ENCODE measurements at regions of chrX and their contacts with region 1.

Region 1: GRCh38 chrX:1537035-1537715 is at the start of gene P2RY8:
- DNase-seq: peak; percentile 56 to 88 (median 80)
- ATAC-seq: peak; percentile 91
- H3K4me3 ChIP-seq: peak within 1 kb of the TSS; percentile 81
- H3K4me3 Mint-ChIP-seq: peak within 1 kb of the TSS; percentile 89 to 99 (median 98)
- H3K27ac ChIP-seq: peak within 1 kb of the TSS; percentile 88
- H3K27ac Mint-ChIP-seq: peak within 1 kb of the TSS; percentile 98 to 100 (median 99)
- H3K4me1 ChIP-seq: peaks cover 3 to 6% of the 10 kb centered on the region in 2 donors
- H3K4me1 Mint-ChIP-seq: peaks cover 11 to 29% (median 20%) of the 10 kb centered on the region in 7 donors
- H3K27me3 ChIP-seq: no peaks in the 10 kb centered on the region
- H3K27me3 Mint-ChIP-seq: no peaks in the 10 kb centered on the region
- total RNA-seq, gene P2RY8: 109 to 158 (median 122) TPM

Region 2: DNA sequence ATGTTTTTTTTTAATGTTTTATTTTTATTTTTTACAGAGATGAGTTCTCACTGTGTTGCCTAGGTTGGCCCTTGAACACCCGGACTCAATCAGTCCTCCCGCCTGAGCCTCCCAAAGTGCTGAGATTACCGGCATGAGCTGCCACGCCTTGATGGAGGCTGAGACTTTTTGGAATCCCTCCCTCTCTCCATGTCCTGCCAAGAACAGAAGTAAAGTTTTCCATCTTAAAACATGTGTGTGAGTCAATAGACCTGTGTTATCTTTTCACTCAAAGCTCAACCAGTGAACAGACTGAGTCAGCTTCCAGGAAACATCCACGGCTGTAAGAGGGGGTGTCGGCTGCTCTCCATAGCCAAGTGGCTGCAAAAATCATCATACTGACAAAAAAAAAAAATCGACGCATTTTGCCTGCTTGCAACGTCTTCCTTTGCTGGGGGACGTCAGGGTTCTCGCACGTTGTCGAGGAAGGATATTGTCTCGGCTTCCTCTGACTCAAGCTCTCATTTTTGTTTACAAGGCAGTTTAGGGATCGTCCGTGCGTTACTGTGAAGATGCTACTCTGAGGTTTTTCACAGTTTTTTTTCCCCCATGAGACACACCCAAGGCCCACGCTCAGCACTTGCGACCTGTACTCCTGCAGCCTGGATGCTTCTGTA is 74.5 kb before region 1 on chrX:
- CTCF ChIA-PET with region 1: no interaction called
- POLR2A ChIA-PET with region 1: no interaction called
- intact Hi-C with region 1: loop called (anchors 1 to 2 kb)
- DNase-seq: peak; percentile 9 to 92 (median 88)
- ATAC-seq: peak; percentile 86
- H3K4me3 ChIP-seq: no peak overlapping the region
- H3K4me3 Mint-ChIP-seq: peak overlapping the region in 9 of 10 donors; percentile 15 to 90 (median 43)
- H3K27ac ChIP-seq: peak overlapping the region; percentile 80
- H3K27ac Mint-ChIP-seq: peak overlapping the region; percentile 84 to 98 (median 95)
- H3K4me1 ChIP-seq: peaks cover 44 to 58% of the 10 kb centered on the region in 2 donors
- H3K4me1 Mint-ChIP-seq: peaks cover 44 to 60% (median 55%) of the 10 kb centered on the region in 7 donors
- H3K27me3 ChIP-seq: no peaks in the 10 kb centered on the region
- H3K27me3 Mint-ChIP-seq: no peaks in the 10 kb centered on the region

Region 3: DNA sequence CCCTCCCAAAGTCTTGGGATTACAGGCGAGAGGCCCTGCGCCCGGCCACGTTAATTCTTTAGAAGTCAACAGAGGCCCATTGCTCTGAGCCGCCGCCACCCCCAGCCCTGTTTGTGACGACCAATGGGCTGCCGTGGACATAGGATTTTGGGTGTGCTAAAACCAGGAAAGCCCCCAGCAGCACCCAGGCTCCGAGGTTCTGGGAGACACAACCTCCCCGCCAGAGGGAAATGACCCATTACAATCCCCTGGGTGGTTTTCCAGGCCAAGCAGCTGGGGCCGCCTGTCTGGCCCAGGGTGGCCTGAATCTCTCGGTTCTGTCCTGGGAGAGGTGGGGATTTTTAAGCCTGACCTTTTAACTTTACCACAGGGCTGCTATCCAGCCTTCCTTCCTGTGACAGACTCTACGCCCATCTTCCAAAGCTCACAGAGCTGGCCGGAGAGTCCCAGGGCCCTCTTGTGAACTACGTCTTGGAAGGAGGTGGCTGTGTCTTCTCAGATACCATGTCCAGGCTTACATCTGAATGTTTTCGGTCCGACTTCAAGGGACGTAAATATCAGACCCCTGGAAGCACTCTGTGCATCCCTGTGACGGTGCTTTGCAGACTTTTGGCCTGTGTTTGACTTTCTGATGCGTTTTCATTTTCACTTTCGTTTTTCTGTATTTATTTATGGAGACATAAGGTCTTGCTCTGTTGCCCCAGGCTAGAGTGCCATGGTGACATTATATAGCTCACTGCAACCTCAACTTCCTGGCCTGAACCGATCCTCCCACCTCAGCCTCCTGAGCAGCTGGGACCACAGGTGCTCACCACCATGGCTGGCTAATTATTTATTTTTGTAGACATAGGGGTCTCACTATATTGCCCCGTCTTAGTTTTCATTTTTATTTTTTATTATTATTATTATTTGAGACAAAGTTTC is 36.2 kb before region 1 on chrX:
- CTCF ChIA-PET with region 1: no interaction called
- POLR2A ChIA-PET with region 1: no interaction called
- intact Hi-C with region 1: loop called in 1 of 2 experiments (anchors 1 kb)
- DNase-seq: peak in 1 of 9 donors; percentile 42
- ATAC-seq: peak; percentile 23
- H3K4me3 ChIP-seq: peak overlapping the region; percentile 24
- H3K4me3 Mint-ChIP-seq: peak overlapping the region in 6 of 10 donors; percentile 12 to 68 (median 46)
- H3K27ac ChIP-seq: peak overlapping the region; percentile 9
- H3K27ac Mint-ChIP-seq: peak overlapping the region; percentile 58 to 94 (median 81)
- H3K4me1 ChIP-seq: peaks cover 7 to 11% of the 10 kb centered on the region in 2 donors
- H3K4me1 Mint-ChIP-seq: peaks cover 10 to 46% (median 34%) of the 10 kb centered on the region in 7 donors
- H3K27me3 ChIP-seq: no peaks in the 10 kb centered on the region
- H3K27me3 Mint-ChIP-seq: no peaks in the 10 kb centered on the region

Region 4: DNA sequence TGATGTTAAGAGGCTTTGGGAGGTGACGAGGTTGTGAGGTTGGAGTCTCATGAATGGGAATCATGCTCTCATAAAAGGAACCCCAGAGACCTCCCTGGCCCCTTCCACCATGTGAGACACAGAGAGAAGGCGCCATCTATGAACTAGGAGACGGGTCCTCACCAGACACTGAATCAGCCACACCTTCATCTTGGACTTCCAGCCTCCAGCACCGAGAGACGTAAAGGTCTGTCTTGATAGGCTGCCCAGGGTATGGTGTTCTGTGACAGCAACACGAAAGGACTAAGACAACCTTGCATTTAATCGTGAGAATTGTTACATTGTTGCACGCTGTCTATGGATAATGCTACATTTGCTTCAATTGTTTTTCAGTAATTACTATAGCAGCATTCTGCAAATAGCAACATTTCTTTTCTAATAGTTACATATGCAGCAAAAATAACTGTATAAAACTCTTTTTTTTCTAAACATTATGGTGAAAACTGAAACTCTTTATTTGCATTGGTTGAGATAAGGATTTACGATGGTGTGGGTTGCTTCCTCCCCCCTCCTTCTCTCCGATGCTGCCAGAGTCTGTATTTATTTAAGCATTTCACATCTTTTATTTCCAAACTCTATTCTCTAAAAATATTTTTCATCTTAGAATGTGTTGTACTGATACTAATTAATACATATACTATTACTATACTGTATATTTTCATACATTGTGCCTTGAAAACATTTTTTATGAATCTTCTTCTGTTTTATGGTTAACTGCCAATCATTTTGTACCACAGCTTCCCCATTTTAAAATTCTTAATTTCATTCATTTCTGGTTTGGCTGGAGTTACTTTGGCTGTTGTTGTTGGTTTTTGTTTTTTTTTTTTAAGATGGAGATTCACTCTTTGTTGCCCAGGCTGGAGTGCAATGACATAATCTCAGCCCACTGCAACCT is 27.8 kb after region 1 on chrX:
- CTCF ChIA-PET with region 1: no interaction called
- POLR2A ChIA-PET with region 1: no interaction called
- intact Hi-C with region 1: loop called in 1 of 2 experiments (anchors 1 kb)
- DNase-seq: no peak
- ATAC-seq: no peak
- H3K4me3 ChIP-seq: no peak overlapping the region
- H3K4me3 Mint-ChIP-seq: peak overlapping the region in 4 of 10 donors; percentile 18 to 51 (median 33)
- H3K27ac ChIP-seq: no peak overlapping the region
- H3K27ac Mint-ChIP-seq: peak overlapping the region in 5 of 9 donors; percentile 24 to 86 (median 52)
- H3K4me1 ChIP-seq: peaks cover 27 to 42% of the 10 kb centered on the region in 2 donors
- H3K4me1 Mint-ChIP-seq: peaks cover 33 to 73% (median 66%) of the 10 kb centered on the region in 7 donors
- H3K27me3 ChIP-seq: no peaks in the 10 kb centered on the region
- H3K27me3 Mint-ChIP-seq: peaks cover 0 to 12% (median 0%) of the 10 kb centered on the region in 5 donors

Region 5: DNA sequence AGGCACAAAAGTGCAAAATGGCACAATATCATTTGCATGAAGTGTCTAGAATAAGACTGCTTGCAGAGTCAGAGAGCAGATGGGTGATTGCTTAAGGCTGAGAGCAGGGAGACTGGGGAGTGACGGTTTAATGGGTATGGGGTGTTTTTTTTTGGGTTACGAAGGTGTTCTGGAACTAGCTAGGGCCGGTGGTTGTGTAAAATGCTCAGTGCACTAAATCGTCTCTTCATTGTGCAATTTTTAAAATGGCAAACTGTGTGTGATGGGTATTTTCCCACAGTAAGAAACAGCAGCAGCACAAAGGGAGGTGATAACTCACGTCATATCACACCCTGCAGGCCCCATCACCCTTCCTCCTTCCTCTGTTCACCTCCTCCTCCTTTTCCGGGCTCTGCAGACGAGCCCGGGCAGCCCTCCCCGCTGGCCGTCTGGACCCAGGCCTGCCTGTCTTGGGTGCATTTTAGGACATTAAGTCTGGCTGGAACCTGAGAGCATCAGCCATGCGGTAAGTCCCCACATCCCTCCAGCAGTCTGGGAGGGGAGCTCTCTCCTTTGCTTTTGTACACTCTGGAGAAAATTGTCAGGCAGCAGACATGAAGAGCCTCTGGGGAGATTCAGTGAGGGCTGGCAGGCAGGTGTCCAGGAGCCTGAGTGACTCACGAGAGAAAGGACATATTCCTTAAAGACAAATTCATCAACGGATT is 120.3 kb after region 1 on chrX:
- CTCF ChIA-PET with region 1: no interaction called
- POLR2A ChIA-PET with region 1: no interaction called
- intact Hi-C with region 1: loop called in 1 of 2 experiments (anchors 2 kb)
- DNase-seq: peak in 8 of 9 donors; percentile 18 to 73 (median 60)
- ATAC-seq: peak; percentile 69
- H3K4me3 ChIP-seq: peak overlapping the region; percentile 69
- H3K4me3 Mint-ChIP-seq: peak overlapping the region; percentile 77 to 99 (median 92)
- H3K27ac ChIP-seq: peak overlapping the region; percentile 80
- H3K27ac Mint-ChIP-seq: peak overlapping the region; percentile 90 to 99 (median 94)
- H3K4me1 ChIP-seq: peaks cover 21 to 24% of the 10 kb centered on the region in 2 donors
- H3K4me1 Mint-ChIP-seq: peaks cover 17 to 40% (median 36%) of the 10 kb centered on the region in 7 donors
- H3K27me3 ChIP-seq: no peaks in the 10 kb centered on the region
- H3K27me3 Mint-ChIP-seq: no peaks in the 10 kb centered on the region